ENCODE measurements at regions of chr19 and their contacts with region 1.

Region 1: GRCh38 chr19:55476100-55476775 is at the start of gene ZNF628:
- DNase-seq: peak; percentile 99
- H3K4me3 Mint-ChIP-seq: peak within 1 kb of the TSS; percentile 89
- H3K27ac Mint-ChIP-seq: peak within 1 kb of the TSS; percentile 91
- H3K4me1 Mint-ChIP-seq: peaks cover 33% of the 10 kb centered on the region
- H3K27me3 Mint-ChIP-seq: no peaks in the 10 kb centered on the region
- CTCF ChIP-seq: no peak
- total RNA-seq, gene ZNF628: 6.2 and 12.1 TPM in 2 replicates

Region 2: GRCh38 chr19:55117636-55118391 is 358.4 kb before region 1 on chr19 and contains the start of gene PPP1R12C:
- CTCF ChIA-PET with region 1: no interaction called
- POLR2A ChIA-PET with region 1: interaction called, 10 read pairs
- intact Hi-C with region 1: no loop called
- DNase-seq: peak; percentile 99
- H3K4me3 Mint-ChIP-seq: peak within 1 kb of the TSS; percentile 87
- H3K27ac Mint-ChIP-seq: peak within 1 kb of the TSS; percentile 92
- H3K4me1 Mint-ChIP-seq: peaks cover 25% of the 10 kb centered on the region
- H3K27me3 Mint-ChIP-seq: peaks cover 4% of the 10 kb centered on the region
- CTCF ChIP-seq: no peak
- total RNA-seq, gene PPP1R12C: 76.4 and 88.6 TPM in 2 replicates

Region 3: GRCh38 chr19:55407800-55408532 is 68.3 kb before region 1 on chr19:
- CTCF ChIA-PET with region 1: interaction called, 4 read pairs
- POLR2A ChIA-PET with region 1: interaction called, 10 read pairs
- intact Hi-C with region 1: no loop called
- DNase-seq: peak; percentile 100
- H3K4me3 Mint-ChIP-seq: peak overlapping the region; percentile 94
- H3K27ac Mint-ChIP-seq: peak overlapping the region; percentile 99
- H3K4me1 Mint-ChIP-seq: peaks cover 21% of the 10 kb centered on the region
- H3K27me3 Mint-ChIP-seq: no peaks in the 10 kb centered on the region
- CTCF ChIP-seq: no peak

Region 4: GRCh38 chr19:55447421-55448174 is 28.6 kb before region 1 on chr19:
- CTCF ChIA-PET with region 1: no interaction called
- POLR2A ChIA-PET with region 1: interaction called, 22 read pairs
- intact Hi-C with region 1: no loop called
- DNase-seq: peak; percentile 96
- H3K4me3 Mint-ChIP-seq: no peak overlapping the region
- H3K27ac Mint-ChIP-seq: no peak overlapping the region
- H3K4me1 Mint-ChIP-seq: peaks cover 27% of the 10 kb centered on the region
- H3K27me3 Mint-ChIP-seq: peaks cover 29% of the 10 kb centered on the region
- CTCF ChIP-seq: no peak

Region 5: DNA sequence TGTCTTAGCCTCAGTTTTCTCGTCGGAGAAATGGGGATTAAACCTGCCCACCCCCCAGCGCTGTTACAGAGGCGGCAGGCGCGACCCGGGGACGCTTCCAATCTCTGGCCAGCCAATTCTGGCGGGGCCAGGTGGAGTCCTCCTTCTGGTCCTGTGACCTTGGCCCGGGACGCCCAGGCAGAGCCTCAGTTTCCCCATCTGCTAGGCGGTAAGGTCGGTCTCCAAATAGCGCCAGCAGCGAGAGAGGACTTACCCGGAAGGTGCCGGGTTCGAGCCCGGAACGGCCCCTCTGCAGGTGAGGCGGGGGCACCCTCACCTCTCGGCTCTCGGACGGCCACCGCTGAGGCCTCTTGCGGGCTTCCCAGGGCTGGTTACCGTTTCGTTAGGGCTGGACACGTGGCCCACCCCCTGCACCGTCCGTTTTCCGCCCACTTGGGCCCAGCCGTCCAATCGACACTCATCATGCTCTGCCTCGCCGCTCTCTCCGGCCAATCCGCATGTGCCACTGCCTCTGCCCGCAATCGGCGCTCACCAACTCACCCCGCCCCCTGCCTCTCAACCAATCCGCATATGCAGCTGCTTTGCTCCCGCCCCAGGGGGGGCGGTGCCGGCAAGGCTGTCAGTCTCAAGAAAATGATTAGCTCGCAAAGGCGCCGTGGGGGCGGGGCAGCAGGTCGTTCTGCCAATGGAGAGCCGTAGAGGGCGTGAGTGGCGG is 14.8 kb before region 1 on chr19 and contains the start of gene ISOC2:
- CTCF ChIA-PET with region 1: interaction called, 42 read pairs
- POLR2A ChIA-PET with region 1: interaction called, 35 read pairs
- intact Hi-C with region 1: no loop called
- DNase-seq: peak; percentile 100
- H3K4me3 Mint-ChIP-seq: peak within 1 kb of the TSS; percentile 97
- H3K27ac Mint-ChIP-seq: peak within 1 kb of the TSS; percentile 83
- H3K4me1 Mint-ChIP-seq: peaks cover 17% of the 10 kb centered on the region
- H3K27me3 Mint-ChIP-seq: no peaks in the 10 kb centered on the region
- CTCF ChIP-seq: no peak
- total RNA-seq, gene ISOC2: 34.3 and 59.9 TPM in 2 replicates

Region 6: DNA sequence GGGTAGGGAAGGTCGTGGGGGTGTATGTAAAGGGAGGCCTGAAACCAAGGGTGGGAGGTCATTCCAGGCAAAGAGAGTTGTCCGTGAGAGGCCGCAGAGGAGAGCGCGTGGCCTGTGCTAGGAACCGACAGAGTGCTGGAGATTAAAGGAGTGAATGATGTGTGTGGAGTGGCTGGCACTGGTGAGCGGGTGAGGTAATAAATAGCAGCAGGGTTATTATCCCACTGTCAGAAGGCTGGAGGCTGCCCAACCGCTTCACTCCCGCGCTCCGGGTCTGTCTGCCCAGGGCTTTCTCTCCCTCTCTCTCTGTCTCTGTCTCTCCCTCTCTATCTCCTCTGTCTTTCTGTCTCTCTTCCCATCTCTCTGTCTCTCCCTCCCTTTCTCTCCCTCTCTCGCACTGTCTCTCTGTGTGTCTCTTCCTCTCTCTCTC is 87.0 kb after region 1 on chr19:
- CTCF ChIA-PET with region 1: no interaction called
- POLR2A ChIA-PET with region 1: no interaction called
- intact Hi-C with region 1: no loop called
- DNase-seq: no peak
- H3K4me3 Mint-ChIP-seq: no peak overlapping the region
- H3K27ac Mint-ChIP-seq: no peak overlapping the region
- H3K4me1 Mint-ChIP-seq: no peaks in the 10 kb centered on the region
- H3K27me3 Mint-ChIP-seq: peaks cover 25% of the 10 kb centered on the region
- CTCF ChIP-seq: no peak

Measured in MCF 10A (cell line).